ENCODE measurements at regions of chr17 and their contacts with region 1.

Region 1: GRCh38 chr17:409848-410545 is 57.4 kb upstream of the RPH3AL start:
- DNase-seq: peak; percentile 77
- H3K4me3 ChIP-seq: peak overlapping the region; percentile 79
- CTCF ChIP-seq: peak; percentile 4

Region 2: DNA sequence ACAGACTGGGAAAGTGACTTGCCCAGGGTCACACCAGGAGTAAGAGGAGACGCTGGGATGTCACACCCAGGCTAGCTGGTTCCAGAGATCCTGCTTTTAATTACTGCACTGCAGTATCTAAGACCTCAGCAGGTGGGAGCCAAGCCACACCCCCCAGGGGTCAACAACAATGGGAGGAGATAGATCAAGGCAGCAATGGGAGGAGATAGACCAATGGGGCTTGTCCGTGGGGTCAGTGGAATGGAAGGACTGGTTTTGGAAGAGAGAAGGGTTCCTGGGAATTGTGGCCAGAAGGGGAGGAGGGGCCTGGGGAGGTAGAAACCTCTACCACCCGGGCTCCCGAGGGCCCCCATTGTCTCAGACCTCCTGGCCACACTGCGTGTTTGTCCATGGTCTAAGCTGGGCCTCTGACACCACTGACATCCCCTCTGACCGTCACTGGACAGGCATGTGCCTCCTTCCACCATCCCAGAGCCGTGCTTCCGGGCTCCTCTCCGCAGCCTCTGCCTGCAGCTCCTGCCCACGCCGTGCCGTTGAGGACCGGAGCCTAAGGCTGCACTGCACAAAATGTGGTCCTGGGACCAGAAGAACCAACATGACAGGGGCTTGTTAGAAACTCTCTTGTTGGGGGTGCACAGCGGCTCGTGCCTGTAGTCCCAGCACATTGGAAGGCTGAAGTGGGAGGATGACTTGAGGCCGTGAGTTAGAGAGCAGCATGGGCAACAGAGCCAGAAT is 12.4 kb after region 1 on chr17:
- CTCF ChIA-PET with region 1: interaction called, 44 read pairs
- POLR2A ChIA-PET with region 1: no interaction called
- DNase-seq: no peak
- H3K4me3 ChIP-seq: no peak overlapping the region
- CTCF ChIP-seq: no peak

Region 3: GRCh38 chr17:601244-601925 is 191.4 kb after region 1 on chr17:
- CTCF ChIA-PET with region 1: interaction called, 16 read pairs
- POLR2A ChIA-PET with region 1: no interaction called
- DNase-seq: no peak
- H3K4me3 ChIP-seq: no peak overlapping the region
- CTCF ChIP-seq: no peak

Region 4: GRCh38 chr17:688100-688989 is 278.3 kb after region 1 on chr17:
- CTCF ChIA-PET with region 1: interaction called, 533 read pairs
- POLR2A ChIA-PET with region 1: interaction called, 5 read pairs
- DNase-seq: no peak
- H3K4me3 ChIP-seq: no peak overlapping the region
- CTCF ChIP-seq: peak; percentile 35

Region 5: DNA sequence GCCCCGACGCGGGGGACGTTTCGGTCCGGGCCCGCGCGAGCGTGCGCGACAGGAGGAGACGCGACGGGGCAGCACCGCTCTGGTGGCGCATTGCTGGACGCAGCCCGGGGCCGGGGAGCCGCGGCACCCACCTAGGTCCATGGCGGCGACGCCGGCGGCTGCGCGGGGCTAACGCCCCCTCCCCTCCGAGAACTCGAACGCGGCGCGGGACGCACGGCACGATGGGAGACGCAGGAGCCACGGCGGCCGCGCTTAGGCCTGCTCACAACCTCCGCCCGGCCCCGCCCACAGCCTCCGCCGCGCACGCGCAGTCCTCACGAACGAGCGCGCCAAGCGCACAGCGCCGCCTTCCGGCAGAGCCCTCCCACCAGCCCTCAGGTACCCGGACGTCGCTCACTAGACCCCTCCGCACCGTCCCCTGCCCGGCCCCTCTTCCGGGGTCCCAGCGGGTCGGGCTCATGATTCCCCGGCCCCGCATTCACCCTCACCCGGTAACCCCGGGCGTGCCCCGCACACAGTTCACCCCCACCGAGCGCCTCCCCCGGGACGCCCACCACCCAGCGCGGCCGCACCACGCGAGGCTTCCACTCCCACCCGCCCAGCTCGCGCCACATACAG is 342.1 kb after region 1 on chr17 and contains the start of gene GEMIN4:
- CTCF ChIA-PET with region 1: interaction called, 13 read pairs
- POLR2A ChIA-PET with region 1: no interaction called
- DNase-seq: no peak
- H3K4me3 ChIP-seq: peak within 1 kb of the TSS; percentile 72
- CTCF ChIP-seq: peak; percentile 98

Measured in AG04449 (cell line).